ENCODE measurements at regions of chr1 and their contacts with region 1.

Region 1: GRCh38 chr1:225860876-225861441 is 21.2 kb downstream of the TMEM63A start:
- DNase-seq: peak in 1 of 10 donors; percentile 24
- ATAC-seq: no peak
- H3K4me3 Mint-ChIP-seq: no peak overlapping the region
- H3K27ac Mint-ChIP-seq: peak overlapping the region in 7 of 10 donors; percentile 4 to 75 (median 63)
- H3K4me1 Mint-ChIP-seq: peaks cover 10 to 33% (median 25%) of the 10 kb centered on the region in 4 donors
- H3K27me3 Mint-ChIP-seq: no peaks in the 10 kb centered on the region

Region 2: GRCh38 chr1:225766967-225767633 is 93.9 kb before region 1 on chr1:
- POLR2A ChIA-PET with region 1: no interaction called
- DNase-seq: no peak
- ATAC-seq: no peak
- H3K4me3 Mint-ChIP-seq: no peak overlapping the region
- H3K27ac Mint-ChIP-seq: peak overlapping the region in 2 of 10 donors; percentile 14 to 72
- H3K4me1 Mint-ChIP-seq: peaks cover 0 to 8% (median 5%) of the 10 kb centered on the region in 4 donors
- H3K27me3 Mint-ChIP-seq: peaks cover 0 to 2% (median 0%) of the 10 kb centered on the region in 5 donors

Region 3: GRCh38 chr1:225838793-225839192 is 22.2 kb before region 1 on chr1:
- POLR2A ChIA-PET with region 1: interaction called, 12 read pairs
- DNase-seq: no peak
- ATAC-seq: no peak
- H3K4me3 Mint-ChIP-seq: no peak overlapping the region
- H3K27ac Mint-ChIP-seq: peak overlapping the region in 5 of 10 donors; percentile 60 to 95 (median 68)
- H3K4me1 Mint-ChIP-seq: peaks cover 22 to 62% (median 31%) of the 10 kb centered on the region in 4 donors
- H3K27me3 Mint-ChIP-seq: no peaks in the 10 kb centered on the region

Region 4: GRCh38 chr1:225875044-225875814 is 14.3 kb after region 1 on chr1:
- POLR2A ChIA-PET with region 1: interaction called, 92 read pairs
- DNase-seq: no peak
- ATAC-seq: no peak
- H3K4me3 Mint-ChIP-seq: peak overlapping the region in 9 of 10 donors; percentile 11 to 94 (median 65)
- H3K27ac Mint-ChIP-seq: peak overlapping the region; percentile 53 to 95 (median 78)
- H3K4me1 Mint-ChIP-seq: peaks cover 38 to 85% (median 68%) of the 10 kb centered on the region in 4 donors
- H3K27me3 Mint-ChIP-seq: no peaks in the 10 kb centered on the region